ENCODE measurements at regions of chr14 and their contacts with region 1.

Region 1: GRCh38 chr14:50773632-50774541 is 57.1 kb downstream of the NIN start:
- DNase-seq: peak; percentile 38 to 89
- H3K4me3 ChIP-seq: no peak overlapping the region
- H3K27ac ChIP-seq: no peak overlapping the region
- H3K4me1 ChIP-seq: no peaks in the 10 kb centered on the region
- H3K27me3 ChIP-seq: no peaks in the 10 kb centered on the region
- CTCF ChIP-seq: peak; percentile 78 to 93 (median 85)
- EP300 ChIP-seq: no peak
- POLR2A ChIP-seq: no peak
- RAD21 ChIP-seq: peak; percentile 90 to 93

Region 2: GRCh38 chr14:50599700-50600444 is 174.0 kb before region 1 on chr14:
- CTCF ChIA-PET with region 1: interaction called, 65 read pairs
- POLR2A ChIA-PET with region 1: no interaction called
- DNase-seq: no peak
- H3K4me3 ChIP-seq: no peak overlapping the region; a peak in 1 of 8 replicates
- H3K27ac ChIP-seq: no peak overlapping the region
- H3K4me1 ChIP-seq: peaks cover 0 to 6% (median 0%) of the 10 kb centered on the region in 4 experiments; a peak in 2 of 7 replicates
- H3K27me3 ChIP-seq: no peaks in the 10 kb centered on the region
- CTCF ChIP-seq: peak in 2 of 3 experiments; percentile 45 to 47; a peak in 2 of 4 replicates
- EP300 ChIP-seq: no peak
- POLR2A ChIP-seq: no peak
- RAD21 ChIP-seq: peak; percentile 69 to 70

Region 3: GRCh38 chr14:50736932-50737419 is 36.9 kb before region 1 on chr14:
- CTCF ChIA-PET with region 1: interaction called, 17 read pairs
- POLR2A ChIA-PET with region 1: no interaction called
- DNase-seq: no peak
- H3K4me3 ChIP-seq: no peak overlapping the region
- H3K27ac ChIP-seq: no peak overlapping the region; the same call in 1 of the 2 replicates
- H3K4me1 ChIP-seq: no peaks in the 10 kb centered on the region
- H3K27me3 ChIP-seq: no peaks in the 10 kb centered on the region
- CTCF ChIP-seq: no peak
- EP300 ChIP-seq: no peak
- POLR2A ChIP-seq: no peak
- RAD21 ChIP-seq: no peak

Region 4: DNA sequence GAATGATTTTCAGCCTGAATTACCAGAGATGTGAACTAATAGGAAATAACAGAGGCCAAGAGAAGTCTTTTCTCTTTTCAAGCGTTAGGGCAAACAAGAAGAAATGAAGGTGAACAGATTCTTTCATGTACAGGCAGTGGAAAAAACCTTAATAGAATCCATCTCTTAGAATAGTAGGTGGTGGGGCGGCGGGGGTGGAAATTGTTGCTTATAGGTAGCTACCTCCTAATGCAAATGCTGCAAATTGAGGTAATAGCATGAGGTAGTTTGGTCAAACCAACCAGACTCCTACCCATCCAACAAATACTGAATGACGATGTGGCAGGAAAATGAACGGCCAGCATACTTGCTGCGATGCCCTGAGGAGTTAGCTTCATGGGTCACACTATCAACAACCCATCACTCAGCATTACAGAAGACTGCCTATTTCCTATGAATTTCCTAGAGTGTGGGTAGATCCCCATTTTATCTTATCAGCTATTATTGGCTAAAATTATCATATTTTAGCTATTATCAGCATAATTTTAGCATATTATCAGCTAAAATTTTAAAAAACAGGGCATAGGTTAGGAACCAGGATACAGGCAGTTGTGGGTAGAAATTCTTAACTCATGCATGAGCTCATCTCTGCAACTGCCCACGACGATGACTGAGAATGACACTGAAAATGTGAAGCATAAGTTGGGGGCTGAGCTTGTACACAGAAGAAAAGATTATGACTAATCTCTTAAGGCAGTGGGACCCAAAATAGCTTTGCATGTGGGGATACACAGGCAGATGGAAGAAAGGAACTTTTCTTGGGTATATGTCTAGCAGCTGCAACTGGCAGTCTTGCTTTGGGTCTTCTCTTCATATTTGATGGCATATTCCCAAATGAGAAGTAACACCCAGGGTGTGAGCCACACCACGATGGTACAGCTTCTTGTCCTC is 11.6 kb before region 1 on chr14:
- CTCF ChIA-PET with region 1: interaction called, 102 read pairs
- POLR2A ChIA-PET with region 1: interaction called, 3 read pairs
- DNase-seq: no peak
- H3K4me3 ChIP-seq: no peak overlapping the region
- H3K27ac ChIP-seq: no peak overlapping the region
- H3K4me1 ChIP-seq: no peaks in the 10 kb centered on the region
- H3K27me3 ChIP-seq: no peaks in the 10 kb centered on the region
- CTCF ChIP-seq: no peak
- EP300 ChIP-seq: no peak
- POLR2A ChIP-seq: no peak
- RAD21 ChIP-seq: no peak

Region 5: GRCh38 chr14:50792051-50792477 is 18.2 kb after region 1 on chr14:
- CTCF ChIA-PET with region 1: interaction called, 40 read pairs
- POLR2A ChIA-PET with region 1: interaction called, 3 read pairs
- DNase-seq: no peak
- H3K4me3 ChIP-seq: no peak overlapping the region
- H3K27ac ChIP-seq: no peak overlapping the region
- H3K4me1 ChIP-seq: peaks cover 0 to 2% (median under 1%) of the 10 kb centered on the region in 4 experiments; a peak in 2 of 7 replicates
- H3K27me3 ChIP-seq: no peaks in the 10 kb centered on the region
- CTCF ChIP-seq: no peak
- EP300 ChIP-seq: no peak
- POLR2A ChIP-seq: no peak
- RAD21 ChIP-seq: no peak

Region 6: GRCh38 chr14:50943261-50943942 is 169.5 kb after region 1 on chr14:
- CTCF ChIA-PET with region 1: no interaction called
- POLR2A ChIA-PET with region 1: no interaction called
- DNase-seq: peak in 1 of 2 experiments; percentile 66
- H3K4me3 ChIP-seq: peak overlapping the region; percentile 53 to 89 (median 78)
- H3K27ac ChIP-seq: no peak overlapping the region
- H3K4me1 ChIP-seq: peaks cover 0 to 4% (median 1%) of the 10 kb centered on the region in 4 experiments; a peak in 4 of 7 replicates
- H3K27me3 ChIP-seq: 0 out of 7 replicates have a peak, but pooled peaks cover 0 to 2% (median 0%) of the 10 kb centered on the region in 4 experiments
- CTCF ChIP-seq: no peak
- EP300 ChIP-seq: no peak
- POLR2A ChIP-seq: no peak; a peak in 1 of 3 replicates
- RAD21 ChIP-seq: no peak

Region 7: GRCh38 chr14:51056421-51056820 is 282.5 kb after region 1 on chr14:
- CTCF ChIA-PET with region 1: no interaction called
- POLR2A ChIA-PET with region 1: no interaction called
- DNase-seq: no peak
- H3K4me3 ChIP-seq: no peak overlapping the region
- H3K27ac ChIP-seq: no peak overlapping the region
- H3K4me1 ChIP-seq: no peaks in the 10 kb centered on the region
- H3K27me3 ChIP-seq: no peaks in the 10 kb centered on the region
- CTCF ChIP-seq: no peak
- EP300 ChIP-seq: no peak
- POLR2A ChIP-seq: no peak
- RAD21 ChIP-seq: no peak